H1 (cell line): ENCODE measurements at regions of chr5 and their contacts with region 1.

Region 1: GRCh38 chr5:134411546-134412266 is at the start of gene CDKN2AIPNL:
- DNase-seq: peak; percentile 59 to 95
- H3K4me3 ChIP-seq: peak within 1 kb of the TSS; percentile 75 to 97 (median 86)
- H3K27ac ChIP-seq: peak within 1 kb of the TSS; percentile 73
- H3K4me1 ChIP-seq: peaks cover 5 to 10% (median 8%) of the 10 kb centered on the region in 4 experiments
- H3K27me3 ChIP-seq: no peaks in the 10 kb centered on the region
- CTCF ChIP-seq: peak; percentile 73 to 94 (median 78)
- EP300 ChIP-seq: peak in 1 of 2 experiments; percentile 78; a peak in 1 of 3 replicates
- POLR2A ChIP-seq: peak; percentile 84 to 94
- RAD21 ChIP-seq: peak; percentile 52 to 74
- total RNA-seq, gene CDKN2AIPNL: 54.3 and 56.3 TPM in 2 replicates

Region 2: DNA sequence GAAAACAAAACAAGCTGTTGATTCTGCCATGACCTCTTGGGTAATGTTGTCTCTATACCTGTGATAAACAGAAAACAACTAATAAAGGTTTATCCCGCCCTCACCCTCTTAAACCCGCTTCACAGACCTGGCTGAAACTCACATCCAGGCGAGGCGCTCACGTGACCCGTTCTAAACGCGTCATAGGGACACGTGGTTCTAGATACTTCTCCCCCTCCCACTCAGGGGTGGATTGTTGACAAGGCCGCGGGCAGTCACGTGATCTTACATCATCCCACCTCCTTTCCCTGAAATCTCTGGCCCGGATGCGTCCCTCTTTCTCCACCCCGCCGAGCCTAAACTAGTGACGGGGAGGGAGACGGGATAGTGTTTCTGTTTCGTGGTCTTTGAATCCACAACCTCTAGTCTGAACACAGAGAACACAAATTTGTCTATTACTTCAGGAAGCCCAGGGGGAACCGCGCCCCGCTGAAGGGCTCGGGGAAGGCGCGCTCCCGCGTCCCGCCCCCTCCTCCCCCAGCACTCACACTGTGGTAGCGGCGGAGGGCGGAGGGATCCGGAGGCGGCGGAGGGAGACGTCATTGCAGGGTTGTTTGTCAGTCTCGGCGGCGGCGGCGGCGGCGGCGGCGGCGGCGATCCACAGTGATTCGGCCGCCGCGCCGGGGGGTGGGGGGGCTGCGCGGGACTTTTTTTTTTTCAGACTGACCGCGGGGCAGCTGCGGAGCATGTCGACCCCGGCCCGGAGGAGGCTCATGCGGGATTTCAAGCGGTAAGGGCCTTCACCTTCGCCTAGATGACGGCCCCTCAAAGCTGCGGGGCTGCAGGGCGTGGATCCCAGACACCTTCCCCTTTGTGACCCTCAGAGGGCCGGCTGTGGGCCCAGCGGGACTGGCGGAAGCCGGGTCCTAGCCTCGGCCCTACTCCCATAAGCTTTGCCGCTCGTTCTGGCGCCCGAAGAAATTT is 40.6 kb before region 1 on chr5 and contains the start of gene UBE2B:
- CTCF ChIA-PET with region 1: interaction called, 4 read pairs
- POLR2A ChIA-PET with region 1: interaction called, 13 read pairs
- DNase-seq: peak; percentile 92 to 97
- H3K4me3 ChIP-seq: peak within 1 kb of the TSS; percentile 83 to 97 (median 91)
- H3K27ac ChIP-seq: peak within 1 kb of the TSS; percentile 98
- H3K4me1 ChIP-seq: no peaks in the 10 kb centered on the region; a peak in 3 of 7 replicates
- H3K27me3 ChIP-seq: no peaks in the 10 kb centered on the region
- CTCF ChIP-seq: no peak
- EP300 ChIP-seq: peak in 1 of 2 experiments; percentile 99; a peak in 2 of 3 replicates
- POLR2A ChIP-seq: peak; percentile 24 to 68
- RAD21 ChIP-seq: no peak
- total RNA-seq, gene UBE2B: 40.3 and 46.8 TPM in 2 replicates

Region 3: DNA sequence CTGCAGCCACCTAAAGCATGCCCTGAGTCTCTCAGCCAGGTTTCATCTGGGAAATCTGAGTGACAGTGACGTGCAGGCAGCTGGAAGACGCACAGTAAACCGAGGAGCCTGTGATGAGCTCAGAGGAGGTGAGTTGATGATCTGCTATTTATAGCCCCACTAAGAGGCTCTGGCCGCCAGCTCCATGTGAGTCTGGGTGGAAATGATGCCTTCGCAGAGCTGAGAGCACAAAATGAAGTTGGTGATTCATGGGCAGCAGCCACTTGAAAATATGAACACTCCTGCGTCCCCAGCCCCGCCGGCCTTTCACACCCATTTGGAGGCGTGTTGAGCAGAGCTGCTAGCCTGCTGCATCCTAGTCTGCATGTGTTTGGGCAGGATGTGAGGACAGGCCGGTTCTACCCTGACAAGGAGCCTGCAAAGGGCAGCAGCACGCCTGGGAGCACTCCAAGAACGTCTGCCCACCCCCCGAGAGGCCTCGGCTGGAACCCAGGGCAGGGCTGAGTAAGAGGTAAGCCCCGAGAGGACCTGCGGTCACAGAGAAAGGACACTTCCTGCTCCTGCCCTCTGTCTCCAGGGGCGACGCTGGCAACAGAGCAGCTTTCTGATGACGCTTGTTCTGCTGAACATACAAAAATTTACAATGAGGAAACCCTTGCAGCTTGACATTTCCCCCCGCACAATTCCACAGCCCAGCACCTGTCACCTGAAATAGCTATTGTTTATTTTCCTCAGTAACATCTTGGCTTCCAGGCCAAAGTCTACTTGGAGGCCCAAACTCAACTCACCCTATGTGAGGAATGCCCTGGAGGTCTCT is 25.0 kb after region 1 on chr5:
- CTCF ChIA-PET with region 1: interaction called, 10 read pairs
- POLR2A ChIA-PET with region 1: interaction called, 5 read pairs
- DNase-seq: no peak
- H3K4me3 ChIP-seq: no peak overlapping the region
- H3K27ac ChIP-seq: no peak overlapping the region
- H3K4me1 ChIP-seq: peaks cover 0 to 11% (median 7%) of the 10 kb centered on the region in 4 experiments; a peak in 3 of 7 replicates
- H3K27me3 ChIP-seq: no peaks in the 10 kb centered on the region
- CTCF ChIP-seq: no peak
- EP300 ChIP-seq: no peak
- POLR2A ChIP-seq: no peak
- RAD21 ChIP-seq: no peak

Region 4: GRCh38 chr5:134465816-134466240 is 54.1 kb after region 1 on chr5:
- CTCF ChIA-PET with region 1: interaction called, 24 read pairs
- POLR2A ChIA-PET with region 1: interaction called, 5 read pairs
- DNase-seq: peak; percentile 47 to 95
- H3K4me3 ChIP-seq: peak overlapping the region; percentile 62 to 80 (median 68)
- H3K27ac ChIP-seq: peak overlapping the region; percentile 75; the same call in 1 of the 2 replicates
- H3K4me1 ChIP-seq: peaks cover 2 to 19% (median 5%) of the 10 kb centered on the region in 4 experiments
- H3K27me3 ChIP-seq: no peaks in the 10 kb centered on the region
- CTCF ChIP-seq: no peak
- EP300 ChIP-seq: no peak
- POLR2A ChIP-seq: peak in 1 of 2 experiments; percentile 57; a peak in 1 of 3 replicates
- RAD21 ChIP-seq: no peak; a peak in 1 of 4 replicates

Region 5: GRCh38 chr5:134541736-134542376 is 130.2 kb after region 1 on chr5:
- CTCF ChIA-PET with region 1: interaction called, 15 read pairs
- POLR2A ChIA-PET with region 1: interaction called, 3 read pairs
- DNase-seq: peak in 1 of 2 experiments; percentile 85
- H3K4me3 ChIP-seq: no peak overlapping the region
- H3K27ac ChIP-seq: no peak overlapping the region
- H3K4me1 ChIP-seq: peaks cover 6 to 17% (median 9%) of the 10 kb centered on the region in 4 experiments
- H3K27me3 ChIP-seq: no peaks in the 10 kb centered on the region
- CTCF ChIP-seq: no peak
- EP300 ChIP-seq: no peak
- POLR2A ChIP-seq: no peak
- RAD21 ChIP-seq: peak in 1 of 2 experiments; percentile 23; a peak in 2 of 4 replicates

Region 6: GRCh38 chr5:134577796-134578363 is 166.2 kb after region 1 on chr5:
- CTCF ChIA-PET with region 1: interaction called, 30 read pairs
- POLR2A ChIA-PET with region 1: interaction called, 3 read pairs
- DNase-seq: peak; percentile 69 to 94
- H3K4me3 ChIP-seq: no peak overlapping the region
- H3K27ac ChIP-seq: no peak overlapping the region
- H3K4me1 ChIP-seq: no peaks in the 10 kb centered on the region; a peak in 1 of 7 replicates
- H3K27me3 ChIP-seq: no peaks in the 10 kb centered on the region
- CTCF ChIP-seq: peak in 2 of 3 experiments; percentile 93 to 98; a peak in 3 of 4 replicates
- EP300 ChIP-seq: no peak
- POLR2A ChIP-seq: no peak
- RAD21 ChIP-seq: peak; percentile 92 to 93